H1 (cell line): ENCODE measurements at regions of chr17 and their contacts with region 1.

Region 1: GRCh38 chr17:45277216-45277849 is 15.4 kb upstream of the SPATA32 start:
- DNase-seq: peak; percentile 84 to 89
- H3K4me3 ChIP-seq: no peak overlapping the region
- H3K27ac ChIP-seq: no peak overlapping the region
- H3K4me1 ChIP-seq: peaks cover 0 to 4% (median under 1%) of the 10 kb centered on the region in 4 experiments; a peak in 1 of 7 replicates
- H3K27me3 ChIP-seq: no peaks in the 10 kb centered on the region
- CTCF ChIP-seq: peak; percentile 84 to 90 (median 89)
- EP300 ChIP-seq: no peak
- POLR2A ChIP-seq: no peak
- RAD21 ChIP-seq: peak; percentile 77 to 83

Region 2: GRCh38 chr17:45256114-45256966 is 21.0 kb before region 1 on chr17:
- CTCF ChIA-PET with region 1: interaction called, 85 read pairs
- POLR2A ChIA-PET with region 1: interaction called, 3 read pairs
- DNase-seq: no peak
- H3K4me3 ChIP-seq: peak overlapping the region in 1 of 4 experiments; percentile 34; a peak in 1 of 8 replicates
- H3K27ac ChIP-seq: no peak overlapping the region
- H3K4me1 ChIP-seq: peaks cover 0 to 14% (median 5%) of the 10 kb centered on the region in 4 experiments; a peak in 6 of 7 replicates
- H3K27me3 ChIP-seq: peaks cover 0 to 5% (median 2%) of the 10 kb centered on the region in 4 experiments; a peak in 3 of 7 replicates
- CTCF ChIP-seq: peak; percentile 6 to 19 (median 7); a peak in 2 of 4 replicates
- EP300 ChIP-seq: no peak
- POLR2A ChIP-seq: no peak
- RAD21 ChIP-seq: 0 out of 4 replicates have a peak, but pooled peaks of 1 of the 2 experiments have one; percentile 3

Region 3: DNA sequence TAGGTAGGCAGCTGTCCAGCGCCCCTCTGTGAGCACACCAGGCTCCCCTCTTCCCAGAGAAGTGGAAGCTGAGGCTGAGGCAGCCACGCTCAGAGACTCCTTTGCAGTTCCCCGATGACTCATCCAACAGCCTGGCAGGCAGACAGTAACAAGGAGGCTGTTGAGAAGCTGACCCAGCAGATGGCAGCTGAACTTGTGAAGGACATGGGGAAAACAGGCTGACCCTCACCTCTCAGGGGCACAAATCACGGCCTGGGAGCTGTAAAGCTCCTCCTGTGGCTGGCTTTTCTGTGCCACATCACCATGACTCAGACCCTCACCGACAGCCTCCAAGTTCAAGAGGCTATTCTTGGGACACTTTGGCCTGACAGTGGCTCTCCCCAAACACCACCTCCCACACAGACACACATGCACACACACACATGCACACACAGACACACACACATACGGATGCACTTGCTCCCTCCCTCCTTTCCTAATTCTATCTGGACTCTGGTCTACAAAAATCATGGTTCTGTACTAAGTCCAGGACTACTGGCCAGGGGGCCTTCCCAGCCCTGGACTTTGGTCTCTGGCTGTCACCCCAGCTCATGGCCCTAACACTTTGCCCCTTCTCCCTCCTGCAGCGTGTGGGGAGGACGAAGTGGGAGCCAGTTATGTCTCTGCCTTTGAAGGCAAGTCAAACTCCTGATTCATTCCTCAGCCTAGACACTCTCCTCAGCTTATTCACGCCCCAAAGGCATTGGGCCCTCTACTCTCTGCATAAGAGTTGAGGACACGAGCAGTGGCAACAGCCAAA is 16.3 kb after region 1 on chr17:
- CTCF ChIA-PET with region 1: interaction called, 98 read pairs
- POLR2A ChIA-PET with region 1: no interaction called
- DNase-seq: no peak
- H3K4me3 ChIP-seq: no peak overlapping the region
- H3K27ac ChIP-seq: no peak overlapping the region
- H3K4me1 ChIP-seq: peaks cover 0 to 5% (median 0%) of the 10 kb centered on the region in 4 experiments; a peak in 1 of 7 replicates
- H3K27me3 ChIP-seq: no peaks in the 10 kb centered on the region
- CTCF ChIP-seq: peak in 1 of 3 experiments; percentile 16; a peak in 1 of 4 replicates
- EP300 ChIP-seq: no peak
- POLR2A ChIP-seq: no peak
- RAD21 ChIP-seq: no peak; a peak in 1 of 4 replicates

Region 4: GRCh38 chr17:45307290-45308015 is 30.1 kb after region 1 on chr17:
- CTCF ChIA-PET with region 1: interaction called, 47 read pairs
- POLR2A ChIA-PET with region 1: no interaction called
- DNase-seq: no peak
- H3K4me3 ChIP-seq: no peak overlapping the region
- H3K27ac ChIP-seq: no peak overlapping the region
- H3K4me1 ChIP-seq: peaks cover 0 to 3% (median 2%) of the 10 kb centered on the region in 4 experiments
- H3K27me3 ChIP-seq: no peaks in the 10 kb centered on the region; a peak in 1 of 7 replicates
- CTCF ChIP-seq: no peak
- EP300 ChIP-seq: no peak
- POLR2A ChIP-seq: no peak
- RAD21 ChIP-seq: no peak

Region 5: DNA sequence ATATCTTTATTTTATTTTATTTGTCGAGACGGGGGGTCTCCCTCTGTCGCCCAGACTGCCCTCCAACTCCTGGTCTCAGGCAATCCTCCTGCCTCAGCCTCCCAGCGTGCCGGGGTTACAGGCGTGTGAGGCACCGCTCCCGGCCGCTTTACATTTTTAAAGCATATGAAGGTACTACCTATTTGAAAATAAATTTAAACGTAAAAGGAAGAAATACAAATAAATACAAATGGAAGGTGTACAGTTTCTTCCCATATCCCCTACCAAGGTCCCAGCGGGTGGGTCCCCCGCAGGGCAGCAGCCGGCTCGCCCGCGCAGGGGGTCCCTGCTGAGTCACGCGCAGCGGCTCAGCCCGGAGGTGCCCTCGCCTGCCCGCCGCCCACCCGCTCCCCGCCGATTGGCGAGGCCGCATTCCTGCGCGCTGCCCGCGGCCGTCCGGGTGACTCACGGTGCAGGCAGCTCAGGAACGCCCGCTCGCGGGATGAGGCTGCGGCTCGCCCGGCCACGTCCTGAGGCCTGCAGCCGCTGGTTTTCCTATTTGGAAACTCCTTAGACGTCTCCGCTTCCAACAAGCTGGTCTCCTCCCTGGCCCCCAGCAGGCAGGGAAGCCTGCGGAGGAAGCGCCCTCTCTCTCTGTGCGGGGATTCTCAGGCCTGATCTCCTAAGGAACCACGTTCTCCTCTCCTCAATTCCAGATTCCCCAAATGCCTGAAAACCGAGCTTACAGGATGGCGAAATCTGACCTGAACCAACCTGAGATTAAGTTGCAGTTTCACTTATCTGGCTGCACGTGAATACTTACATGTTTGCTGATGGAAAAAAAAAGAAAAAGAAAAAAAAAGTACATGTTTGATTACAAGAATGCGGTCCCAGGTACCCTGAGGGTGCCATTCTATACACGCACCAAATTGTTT is 94.3 kb after region 1 on chr17:
- CTCF ChIA-PET with region 1: interaction called, 18 read pairs
- POLR2A ChIA-PET with region 1: interaction called, 7 read pairs
- DNase-seq: peak; percentile 84 to 92
- H3K4me3 ChIP-seq: peak overlapping the region in 3 of 4 experiments; percentile 1 to 44 (median 14); a peak in 5 of 8 replicates
- H3K27ac ChIP-seq: peak overlapping the region; percentile 79
- H3K4me1 ChIP-seq: peaks cover 8 to 28% (median 16%) of the 10 kb centered on the region in 4 experiments
- H3K27me3 ChIP-seq: no peaks in the 10 kb centered on the region
- CTCF ChIP-seq: no peak
- EP300 ChIP-seq: 0 out of 3 replicates have a peak, but pooled peaks of 1 of the 2 experiments have one; percentile 45
- POLR2A ChIP-seq: peak; percentile 50 to 53; a peak in 2 of 3 replicates
- RAD21 ChIP-seq: no peak; a peak in 1 of 4 replicates

Region 6: DNA sequence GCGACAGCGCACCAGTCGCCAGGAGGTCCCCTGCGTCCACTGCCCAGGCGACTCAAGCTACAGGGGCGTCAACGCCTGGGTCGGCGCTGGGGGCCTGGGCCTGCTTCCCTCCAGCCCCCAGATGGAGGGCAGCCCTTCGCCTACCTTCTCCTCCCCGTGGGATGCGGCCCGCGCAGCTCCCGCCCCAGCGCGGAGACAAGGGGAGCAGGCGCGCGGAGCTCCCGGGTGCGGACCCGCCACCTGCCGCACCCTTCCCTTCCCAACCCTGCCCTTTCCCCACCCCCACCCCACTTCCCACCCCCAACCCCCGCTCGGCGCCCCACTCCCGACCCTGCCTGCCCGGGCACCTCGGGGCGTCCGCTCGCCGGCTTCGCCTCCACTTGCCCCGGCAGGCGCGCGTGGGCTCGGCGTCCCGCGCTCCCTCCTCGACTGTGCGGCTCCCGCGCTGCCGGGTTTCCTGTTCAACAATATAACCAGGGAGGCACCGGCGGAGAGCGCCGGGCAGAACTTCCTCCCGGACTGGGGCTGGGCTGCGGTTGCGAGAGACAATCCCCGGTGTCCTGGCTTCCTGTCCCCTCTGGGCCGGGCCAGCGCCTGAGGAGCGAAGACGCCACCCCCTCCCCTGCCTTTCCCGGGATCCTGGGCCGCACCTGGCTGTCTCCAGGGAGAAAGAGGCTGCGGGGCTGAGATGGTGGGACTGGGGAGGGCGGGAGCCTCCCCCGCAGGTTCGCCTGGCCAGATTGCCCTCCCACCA is 155.2 kb after region 1 on chr17 and contains the start of gene ARHGAP27:
- CTCF ChIA-PET with region 1: no interaction called
- POLR2A ChIA-PET with region 1: no interaction called
- DNase-seq: peak in 1 of 2 experiments; percentile 76
- H3K4me3 ChIP-seq: peak within 1 kb of the TSS; percentile 54 to 65 (median 56)
- H3K27ac ChIP-seq: no peak within 1 kb of the TSS
- H3K4me1 ChIP-seq: peaks cover 6 to 23% (median 17%) of the 10 kb centered on the region in 4 experiments
- H3K27me3 ChIP-seq: peaks cover 21 to 49% (median 43%) of the 10 kb centered on the region in 4 experiments
- CTCF ChIP-seq: no peak
- EP300 ChIP-seq: no peak
- POLR2A ChIP-seq: no peak
- RAD21 ChIP-seq: no peak
- total RNA-seq, gene ARHGAP27: 13.1 TPM in 2 replicates